Heart left ventricle (tissue), 16 donors: ENCODE measurements at regions of chr2 and their contacts with region 1.

Region 1: GRCh38 chr2:9261231-9261883 is 54.7 kb downstream of the ASAP2 start:
- DNase-seq: peak in 4 of 5 donors; percentile 44 to 66 (median 53)
- ATAC-seq: peak in 2 of 4 donors; percentile 23 to 30
- H3K4me3 ChIP-seq: no peak overlapping the region
- H3K27ac ChIP-seq: peak overlapping the region; percentile 53 to 94 (median 84)
- H3K4me1 ChIP-seq: peaks cover 33 to 98% (median 84%) of the 10 kb centered on the region in 12 donors
- H3K27me3 ChIP-seq: no peaks in the 10 kb centered on the region
- CTCF ChIP-seq: peak in 1 of 12 donors; percentile 13
- POLR2A ChIP-seq: no peak

Region 2: DNA sequence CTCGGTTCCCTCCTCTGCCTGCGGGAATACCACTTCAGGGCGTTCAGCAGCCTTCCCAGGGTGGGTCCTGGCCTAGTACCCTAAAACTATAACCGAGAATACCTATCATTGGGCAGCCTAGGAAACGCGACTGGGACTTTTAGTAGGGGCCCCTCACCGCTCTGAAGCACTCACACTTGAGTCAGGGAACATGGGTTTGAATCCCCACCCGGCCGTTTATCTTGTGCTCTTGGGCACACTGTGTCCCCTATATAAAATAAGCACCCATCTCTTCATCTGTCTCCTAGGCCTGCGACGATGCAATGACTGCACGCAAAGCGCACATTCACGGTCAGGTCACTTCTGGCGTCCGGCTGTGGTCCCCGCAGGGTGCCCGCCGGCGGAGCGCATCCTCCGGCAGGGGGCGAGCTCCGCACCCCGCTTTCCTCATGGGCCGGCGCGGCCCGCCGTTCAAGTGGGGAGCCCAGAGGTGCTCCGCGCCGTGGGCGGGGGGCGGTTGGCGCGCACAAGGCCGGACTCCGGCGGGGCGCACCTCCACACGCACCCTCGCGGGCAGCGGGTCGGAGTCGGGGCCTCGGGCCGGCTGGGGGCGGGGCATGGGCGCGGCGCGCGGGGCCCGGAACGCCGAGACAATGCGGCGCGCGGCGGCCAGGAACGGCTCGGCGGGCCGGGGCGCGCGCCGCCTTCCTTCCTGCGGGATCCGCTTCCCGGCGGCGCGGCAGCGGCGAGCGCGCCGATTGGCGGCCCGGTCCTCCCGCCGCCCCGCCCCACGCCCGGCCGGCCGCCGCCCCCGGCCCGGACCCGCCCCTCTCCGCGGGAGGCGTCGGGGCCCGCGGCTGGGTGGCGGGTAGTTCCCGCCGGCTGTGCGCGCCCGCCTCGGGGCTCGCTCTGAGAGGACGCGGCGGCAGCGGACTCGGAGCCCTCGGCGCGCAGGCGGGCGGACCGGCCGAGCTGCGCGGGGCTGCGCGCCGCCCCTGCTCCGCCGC is 55.1 kb before region 1 on chr2 and contains the start of gene ASAP2:
- intact Hi-C with region 1: loop called in 8 of 10 experiments (anchors 2 to 5 kb)
- DNase-seq: peak; percentile 74 to 89 (median 77)
- ATAC-seq: peak; percentile 63 to 85 (median 82)
- H3K4me3 ChIP-seq: peak within 1 kb of the TSS; percentile 60 to 99 (median 86)
- H3K27ac ChIP-seq: peak within 1 kb of the TSS; percentile 56 to 94 (median 88)
- H3K4me1 ChIP-seq: peaks cover 0 to 40% (median 18%) of the 10 kb centered on the region in 12 donors
- H3K27me3 ChIP-seq: peaks cover 0 to 12% (median 0%) of the 10 kb centered on the region in 9 donors
- CTCF ChIP-seq: peak; percentile 65 to 94 (median 82)
- POLR2A ChIP-seq: no peak
- total RNA-seq, gene ASAP2: 7.4 to 17.0 (median 12.9) TPM

Region 3: GRCh38 chr2:9217838-9218770 is 43.3 kb before region 1 on chr2:
- intact Hi-C with region 1: loop called in 2 of 10 experiments (anchors 5 kb)
- DNase-seq: no peak
- ATAC-seq: peak in 3 of 4 donors; percentile 25 to 77 (median 39)
- H3K4me3 ChIP-seq: no peak overlapping the region
- H3K27ac ChIP-seq: peak overlapping the region in 3 of 12 donors; percentile 4 to 22 (median 4)
- H3K4me1 ChIP-seq: peaks cover 0 to 81% (median 33%) of the 10 kb centered on the region in 12 donors
- H3K27me3 ChIP-seq: no peaks in the 10 kb centered on the region
- CTCF ChIP-seq: no peak
- POLR2A ChIP-seq: no peak

Region 4: DNA sequence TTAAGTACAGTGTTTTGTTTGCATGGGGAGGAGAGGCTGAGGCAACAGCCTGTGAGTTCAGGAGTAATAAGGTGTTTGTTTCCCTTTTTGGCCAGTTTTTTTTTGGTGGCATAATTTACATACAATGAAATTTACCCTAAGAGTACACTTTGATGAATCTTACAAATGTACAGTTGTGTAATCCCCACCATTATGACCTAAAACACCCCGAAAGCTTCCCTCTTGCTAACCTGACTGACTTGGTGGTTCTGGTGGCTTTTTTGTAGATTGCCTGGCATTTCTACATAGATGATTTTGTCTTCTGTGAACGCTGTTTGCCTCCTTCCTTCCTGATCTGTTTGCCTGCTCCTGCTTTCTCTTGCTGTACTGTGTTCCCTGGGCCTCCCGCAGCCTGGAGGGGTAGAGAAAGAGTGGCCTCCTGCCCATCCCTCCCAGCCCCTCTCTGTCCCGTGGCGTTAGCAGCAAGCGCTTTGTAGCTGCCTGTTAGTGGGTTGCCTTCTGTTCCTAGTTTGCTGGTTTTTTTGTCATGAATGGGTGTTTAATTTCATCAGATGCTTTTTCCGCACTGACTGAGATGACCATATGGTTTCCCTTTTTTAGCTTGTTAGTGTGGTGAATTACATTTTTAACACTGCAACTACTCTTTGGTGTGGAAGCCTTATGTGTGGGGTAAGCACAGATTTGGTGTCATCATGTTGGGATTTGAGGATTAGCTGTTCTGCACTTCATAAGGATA is 22.6 kb before region 1 on chr2:
- intact Hi-C with region 1: loop called in 1 of 10 experiments (anchors 2 kb)
- DNase-seq: no peak
- ATAC-seq: no peak
- H3K4me3 ChIP-seq: no peak overlapping the region
- H3K27ac ChIP-seq: peak overlapping the region in 10 of 12 donors; percentile 11 to 87 (median 72)
- H3K4me1 ChIP-seq: peaks cover 19 to 88% (median 57%) of the 10 kb centered on the region in 12 donors
- H3K27me3 ChIP-seq: no peaks in the 10 kb centered on the region
- CTCF ChIP-seq: no peak
- POLR2A ChIP-seq: no peak

Region 5: DNA sequence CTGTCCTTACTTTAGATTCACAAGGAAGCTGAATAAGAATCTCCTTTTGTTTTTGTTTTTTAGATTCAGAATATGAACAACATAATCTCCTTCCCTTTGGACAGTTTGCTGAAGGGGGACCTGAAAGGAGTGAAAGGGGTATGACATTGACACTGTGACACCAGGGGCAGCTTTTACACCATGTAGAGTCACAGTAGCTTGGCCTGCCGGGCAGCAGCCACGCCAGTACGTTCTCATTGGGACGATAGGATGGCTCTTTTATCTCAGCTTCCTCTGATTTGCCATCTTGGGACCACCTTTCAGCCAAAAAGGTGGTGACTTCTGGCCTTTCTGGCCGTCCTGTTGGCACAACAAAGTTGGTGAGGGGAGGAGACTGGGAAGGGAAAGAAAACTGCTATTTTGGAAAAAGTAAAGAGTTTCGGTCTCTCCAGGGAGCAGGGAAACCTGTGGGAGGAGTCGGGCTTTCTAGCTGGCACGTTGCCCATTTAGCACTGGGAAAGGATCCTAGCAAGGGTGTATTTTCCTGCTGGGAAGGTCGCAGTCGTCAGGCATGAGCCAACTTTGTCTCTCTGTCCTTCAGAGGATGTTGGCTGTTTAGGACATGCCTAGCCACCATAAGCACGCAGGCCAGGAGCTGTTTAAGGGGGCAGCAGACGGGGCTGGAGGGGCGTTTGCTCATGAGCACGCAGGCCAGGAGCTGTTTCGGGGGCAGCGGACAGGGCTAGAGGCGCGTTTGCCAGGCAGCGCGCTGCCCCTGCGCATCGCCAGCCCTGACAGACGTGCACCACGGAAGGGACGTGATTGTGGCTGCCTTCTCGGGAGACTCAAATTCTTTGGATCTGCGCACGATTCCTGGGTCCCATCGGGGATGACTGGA is 57.3 kb after region 1 on chr2:
- intact Hi-C with region 1: loop called in 4 of 10 experiments (anchors 5 to 10 kb)
- DNase-seq: peak; percentile 77 to 85 (median 82)
- ATAC-seq: peak; percentile 56 to 90 (median 82)
- H3K4me3 ChIP-seq: peak overlapping the region in 3 of 12 donors; percentile 13 to 21 (median 19)
- H3K27ac ChIP-seq: peak overlapping the region in 11 of 12 donors; percentile 55 to 85 (median 69)
- H3K4me1 ChIP-seq: peaks cover 3 to 29% (median 21%) of the 10 kb centered on the region in 12 donors
- H3K27me3 ChIP-seq: no peaks in the 10 kb centered on the region
- CTCF ChIP-seq: no peak
- POLR2A ChIP-seq: no peak

Region 6: GRCh38 chr2:9333591-9334171 is 72.3 kb after region 1 on chr2:
- intact Hi-C with region 1: loop called in 2 of 10 experiments (anchors 5 to 10 kb)
- DNase-seq: peak in 4 of 5 donors; percentile 61 to 68 (median 63)
- ATAC-seq: peak; percentile 68 to 87 (median 83)
- H3K4me3 ChIP-seq: no peak overlapping the region
- H3K27ac ChIP-seq: peak overlapping the region in 4 of 12 donors; percentile 10 to 31 (median 15)
- H3K4me1 ChIP-seq: peaks cover 0 to 65% (median 20%) of the 10 kb centered on the region in 12 donors
- H3K27me3 ChIP-seq: no peaks in the 10 kb centered on the region
- CTCF ChIP-seq: peak; percentile 61 to 82 (median 70)
- POLR2A ChIP-seq: no peak

Region 7: GRCh38 chr2:9573840-9574239 is 312.5 kb after region 1 on chr2:
- intact Hi-C with region 1: no loop called
- DNase-seq: no peak
- ATAC-seq: peak in 1 of 4 donors; percentile 8
- H3K4me3 ChIP-seq: no peak overlapping the region
- H3K27ac ChIP-seq: peak overlapping the region; percentile 10 to 65 (median 46)
- H3K4me1 ChIP-seq: peaks cover 0 to 45% (median 19%) of the 10 kb centered on the region in 12 donors
- H3K27me3 ChIP-seq: no peaks in the 10 kb centered on the region
- CTCF ChIP-seq: no peak
- POLR2A ChIP-seq: no peak

Region 8: GRCh38 chr2:9585486-9585885 is 324.1 kb after region 1 on chr2:
- intact Hi-C with region 1: no loop called
- DNase-seq: no peak
- ATAC-seq: no peak
- H3K4me3 ChIP-seq: no peak overlapping the region
- H3K27ac ChIP-seq: no peak overlapping the region
- H3K4me1 ChIP-seq: no peaks in the 10 kb centered on the region
- H3K27me3 ChIP-seq: no peaks in the 10 kb centered on the region
- CTCF ChIP-seq: no peak
- POLR2A ChIP-seq: no peak